PC-3 (cell line): ENCODE measurements at regions of chr13 and their contacts with region 1.

Region 1: DNA sequence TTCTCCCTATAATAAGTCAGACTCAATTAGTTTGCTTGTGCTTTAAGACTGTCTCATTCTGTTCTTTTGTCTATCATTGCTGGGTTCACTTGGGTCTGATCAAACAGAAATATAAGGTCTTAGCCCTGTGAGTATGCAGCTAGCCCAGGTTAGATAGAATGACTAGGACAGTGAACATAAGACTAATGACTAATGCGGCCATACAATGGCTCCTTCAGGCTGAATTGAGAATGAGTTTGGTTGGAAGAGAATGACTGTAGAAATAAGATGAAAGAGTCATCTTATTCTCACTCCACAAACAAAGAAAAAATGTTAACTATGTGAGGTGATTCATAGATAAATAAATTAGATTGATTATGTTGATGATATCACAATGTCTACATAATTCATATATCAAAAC is 50.1 kb upstream of the OBI1 start:
- DNase-seq: peak; percentile 79
- ATAC-seq: peak; percentile 95
- H3K4me3 ChIP-seq: no peak overlapping the region
- H3K27ac ChIP-seq: peak overlapping the region; percentile 44
- H3K4me1 ChIP-seq: peaks cover 21% of the 10 kb centered on the region
- H3K27me3 ChIP-seq: no peaks in the 10 kb centered on the region
- CTCF ChIP-seq: no peak

Region 2: GRCh38 chr13:78658635-78659449 is 50.2 kb before region 1 on chr13 and contains the start of gene OBI1:
- CTCF ChIA-PET with region 1: no interaction called
- POLR2A ChIA-PET with region 1: no interaction called
- intact Hi-C with region 1: loop called (anchors 5 kb)
- DNase-seq: peak; percentile 80
- ATAC-seq: peak; percentile 93
- H3K4me3 ChIP-seq: peak within 1 kb of the TSS; percentile 76
- H3K27ac ChIP-seq: peak within 1 kb of the TSS; percentile 60
- H3K4me1 ChIP-seq: peaks cover 6% of the 10 kb centered on the region; the same call in 1 of the 2 replicates
- H3K27me3 ChIP-seq: no peaks in the 10 kb centered on the region
- CTCF ChIP-seq: no peak
- total RNA-seq, gene OBI1: 6.3 and 7.9 TPM in 2 replicates